Activated T-helper 1 cell treated with anti-CD3 and anti-CD28 coated beads, Interleukin-12 subunit alpha, Interleukin-12 subunit beta, Interleukin-2, Interleukin-4 antibody, amounts not matched to agents 30 ng/mL and 10 ng/mL and 1 ng/mL, durations not matched to agents 14 hours and 24 hours and 36 hours (primary cell): ENCODE measurements at regions of chr5 and their contacts with region 1.

Region 1: DNA sequence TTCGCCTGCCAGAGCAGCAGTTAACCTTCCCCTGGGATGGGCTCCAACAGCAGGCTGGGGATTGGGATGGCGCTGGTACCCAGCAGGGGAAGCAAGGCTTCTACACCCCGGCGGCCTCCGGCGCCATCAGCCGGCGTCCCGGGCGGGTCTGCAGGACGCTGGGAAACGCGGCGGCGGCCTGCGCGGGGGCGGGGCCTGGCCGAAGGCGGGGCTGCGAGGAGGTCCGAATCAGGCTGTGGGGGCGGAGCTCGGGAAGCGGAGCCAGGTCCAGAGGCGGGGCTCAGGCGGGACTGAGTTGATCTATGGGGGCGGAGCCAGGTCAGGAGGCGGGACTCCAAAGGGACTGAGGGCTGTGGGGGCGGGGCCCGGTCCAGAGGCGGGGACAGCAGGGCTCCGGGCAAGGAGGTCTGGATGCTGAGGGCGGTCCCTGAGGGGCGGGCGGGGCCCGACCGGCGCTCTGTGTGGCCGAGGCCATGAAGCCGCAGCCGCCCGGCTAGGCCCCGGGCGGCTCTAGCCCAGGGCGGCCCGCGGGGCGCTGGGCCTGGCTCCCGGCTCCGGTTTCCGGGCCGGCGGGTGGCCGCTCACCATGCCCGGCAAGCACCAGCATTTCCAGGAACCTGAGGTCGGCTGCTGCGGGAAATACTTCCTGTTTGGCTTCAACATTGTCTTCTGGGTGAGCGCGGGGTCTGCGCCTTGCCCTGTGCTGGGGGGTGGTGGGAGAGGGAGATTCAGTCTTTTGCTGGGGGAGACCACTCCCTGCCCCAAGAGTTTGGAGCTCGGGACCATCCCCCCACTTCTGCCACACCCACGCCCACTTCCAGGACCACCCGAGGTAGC is at the start of gene TSPAN17:
- DNase-seq: peak; percentile 99
- H3K4me3 Mint-ChIP-seq: peak within 1 kb of the TSS; percentile 88
- H3K27ac Mint-ChIP-seq: peak within 1 kb of the TSS; percentile 93
- H3K4me1 Mint-ChIP-seq: peaks cover 49% of the 10 kb centered on the region
- H3K27me3 Mint-ChIP-seq: no peaks in the 10 kb centered on the region
- total RNA-seq, gene TSPAN17: 34.1 and 35.3 TPM in 2 replicates

Region 2: GRCh38 chr5:176361437-176362232 is 285.6 kb before region 1 on chr5 and contains the start of gene KIAA1191:
- intact Hi-C with region 1: loop called (anchors 1 kb)
- DNase-seq: peak; percentile 93
- H3K4me3 Mint-ChIP-seq: peak within 1 kb of the TSS; percentile 97
- H3K27ac Mint-ChIP-seq: peak within 1 kb of the TSS; percentile 91
- H3K4me1 Mint-ChIP-seq: peaks cover 36% of the 10 kb centered on the region
- H3K27me3 Mint-ChIP-seq: no peaks in the 10 kb centered on the region
- total RNA-seq, gene KIAA1191: 60.9 and 63.4 TPM in 2 replicates

Region 3: DNA sequence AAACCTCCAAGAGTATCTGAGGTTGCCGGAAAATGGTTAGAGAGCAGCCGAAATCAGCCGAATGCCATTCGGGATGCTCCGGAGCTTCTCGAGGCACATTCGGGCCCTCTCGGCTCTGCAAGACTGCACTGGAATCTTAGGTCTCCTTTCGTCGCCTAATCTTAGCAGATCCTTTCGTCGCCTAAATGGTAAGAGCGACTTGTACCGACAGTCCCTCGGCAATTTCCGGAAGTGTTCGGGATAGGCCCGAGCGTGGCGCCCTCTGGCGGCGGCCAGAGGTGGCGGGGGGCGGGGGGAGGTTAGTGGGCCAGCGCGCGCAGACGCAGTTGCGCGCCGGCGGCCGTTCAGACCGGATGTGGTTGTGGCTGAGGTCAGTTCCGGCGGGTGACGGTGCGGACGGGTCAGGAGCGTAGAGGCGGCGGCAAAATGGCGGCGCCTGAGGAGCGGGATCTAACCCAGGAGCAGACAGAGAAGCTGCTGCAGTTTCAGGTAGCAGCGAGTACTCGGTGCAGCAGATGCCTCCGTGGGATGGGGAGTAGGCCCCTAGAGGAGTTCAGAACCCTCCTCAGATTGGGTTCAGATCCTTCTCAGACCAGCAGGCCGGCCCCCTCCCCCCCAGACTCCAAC is 199.2 kb before region 1 on chr5 and contains the start of gene FAF2:
- intact Hi-C with region 1: loop called (anchors 1 kb)
- DNase-seq: peak; percentile 99
- H3K4me3 Mint-ChIP-seq: peak within 1 kb of the TSS; percentile 97
- H3K27ac Mint-ChIP-seq: peak within 1 kb of the TSS; percentile 96
- H3K4me1 Mint-ChIP-seq: peaks cover 40% of the 10 kb centered on the region
- H3K27me3 Mint-ChIP-seq: peaks cover 2% of the 10 kb centered on the region
- total RNA-seq, gene FAF2: 46.0 and 47.3 TPM in 2 replicates

Region 4: GRCh38 chr5:176590035-176590717 is 57.1 kb before region 1 on chr5:
- intact Hi-C with region 1: no loop called
- DNase-seq: no peak
- H3K4me3 Mint-ChIP-seq: no peak overlapping the region
- H3K27ac Mint-ChIP-seq: no peak overlapping the region
- H3K4me1 Mint-ChIP-seq: no peaks in the 10 kb centered on the region
- H3K27me3 Mint-ChIP-seq: peaks cover 4% of the 10 kb centered on the region

Region 5: GRCh38 chr5:176609724-176610434 is 37.4 kb before region 1 on chr5 and contains the start of gene GPRIN1:
- intact Hi-C with region 1: loop called (anchors 1 kb)
- DNase-seq: peak; percentile 65
- H3K4me3 Mint-ChIP-seq: peak within 1 kb of the TSS; percentile 88
- H3K27ac Mint-ChIP-seq: peak within 1 kb of the TSS; percentile 76
- H3K4me1 Mint-ChIP-seq: peaks cover 20% of the 10 kb centered on the region
- H3K27me3 Mint-ChIP-seq: peaks cover 39% of the 10 kb centered on the region
- total RNA-seq, gene GPRIN1: 3.1 and 3.2 TPM in 2 replicates

Region 6: GRCh38 chr5:177006265-177006972 is 359.2 kb after region 1 on chr5 and contains the start of gene UIMC1:
- intact Hi-C with region 1: loop called (anchors 2 kb)
- DNase-seq: peak; percentile 91
- H3K4me3 Mint-ChIP-seq: peak within 1 kb of the TSS; percentile 96
- H3K27ac Mint-ChIP-seq: peak within 1 kb of the TSS; percentile 95
- H3K4me1 Mint-ChIP-seq: peaks cover 22% of the 10 kb centered on the region
- H3K27me3 Mint-ChIP-seq: no peaks in the 10 kb centered on the region
- total RNA-seq, gene UIMC1: 57.0 and 70.6 TPM in 2 replicates

Region 7: GRCh38 chr5:178153573-178154343 is 1506.5 kb after region 1 on chr5 and contains the start of gene NHP2:
- intact Hi-C with region 1: loop called (anchors 5 kb)
- DNase-seq: peak; percentile 98
- H3K4me3 Mint-ChIP-seq: peak within 1 kb of the TSS; percentile 97
- H3K27ac Mint-ChIP-seq: peak within 1 kb of the TSS; percentile 86
- H3K4me1 Mint-ChIP-seq: peaks cover 54% of the 10 kb centered on the region
- H3K27me3 Mint-ChIP-seq: no peaks in the 10 kb centered on the region
- total RNA-seq, gene NHP2: 264 and 265 TPM in 2 replicates